HEK293T (cell line): ENCODE measurements at regions of chr3 and their contacts with region 1.

Region 1: DNA sequence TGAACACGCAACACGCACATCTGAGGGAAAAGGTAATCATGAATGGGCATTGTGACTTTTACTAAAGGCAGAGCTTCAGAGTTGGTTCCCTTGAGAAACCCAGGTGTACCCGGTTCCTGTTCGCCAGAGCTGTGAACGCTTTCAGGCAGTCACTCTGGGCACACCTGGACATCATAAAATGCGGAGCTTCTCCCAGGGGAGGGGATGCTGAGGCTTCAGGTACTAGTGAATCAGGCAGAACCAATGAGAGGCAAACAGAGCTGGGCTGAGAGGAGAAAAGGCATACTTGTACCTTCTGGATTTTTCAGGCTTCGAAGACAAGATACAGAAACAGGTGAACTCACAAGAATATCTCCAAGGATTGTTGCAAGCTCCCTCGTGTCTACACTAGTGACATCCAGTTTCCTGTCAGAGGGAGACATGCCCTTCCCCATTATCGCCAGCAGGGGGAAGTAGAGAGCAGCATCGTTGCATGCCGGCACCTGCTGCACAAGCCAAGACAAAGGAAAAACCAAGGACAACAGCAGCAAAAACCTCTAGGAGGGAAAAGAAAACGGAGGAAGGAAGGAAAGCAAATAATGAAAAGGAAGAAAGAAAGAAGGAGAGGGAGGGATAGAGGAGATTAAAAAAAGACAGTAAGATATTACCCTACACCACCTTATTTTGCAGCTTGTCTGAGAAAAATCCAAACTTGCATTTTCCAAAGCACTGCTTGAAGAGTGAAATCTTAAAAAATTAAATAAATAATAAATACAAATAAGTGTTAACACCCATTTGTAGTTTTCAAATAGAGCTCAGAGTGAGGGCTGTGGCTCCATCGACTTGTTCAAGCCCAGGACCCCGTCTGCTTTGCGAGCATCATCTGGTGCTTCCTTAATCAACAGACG is 2.0 kb downstream of the AHSG start:
- DNase-seq: peak; percentile 75

Region 2: DNA sequence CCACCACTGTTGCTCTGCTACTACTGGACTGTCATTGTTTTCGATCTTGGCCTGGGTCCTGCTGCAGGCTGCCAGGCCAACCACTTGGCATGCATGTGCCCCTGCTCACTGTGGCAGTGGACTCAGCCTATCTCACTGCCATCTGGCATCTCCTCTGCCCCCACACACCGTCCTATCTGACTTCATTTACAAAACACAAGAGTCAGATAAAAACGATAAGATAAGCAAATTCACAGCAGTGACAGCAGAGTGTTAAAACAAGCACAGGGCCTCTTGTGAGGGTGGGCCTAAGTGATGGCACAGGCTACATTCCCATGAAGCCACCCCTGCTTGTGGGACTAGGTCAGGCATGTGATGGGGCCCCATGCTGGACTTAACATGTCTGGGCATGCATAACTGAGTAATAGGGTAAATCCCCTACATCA is 138.8 kb before region 1 on chr3:
- CTCF ChIA-PET with region 1: no interaction called
- POLR2A ChIA-PET with region 1: no interaction called
- DNase-seq: no peak

Region 3: DNA sequence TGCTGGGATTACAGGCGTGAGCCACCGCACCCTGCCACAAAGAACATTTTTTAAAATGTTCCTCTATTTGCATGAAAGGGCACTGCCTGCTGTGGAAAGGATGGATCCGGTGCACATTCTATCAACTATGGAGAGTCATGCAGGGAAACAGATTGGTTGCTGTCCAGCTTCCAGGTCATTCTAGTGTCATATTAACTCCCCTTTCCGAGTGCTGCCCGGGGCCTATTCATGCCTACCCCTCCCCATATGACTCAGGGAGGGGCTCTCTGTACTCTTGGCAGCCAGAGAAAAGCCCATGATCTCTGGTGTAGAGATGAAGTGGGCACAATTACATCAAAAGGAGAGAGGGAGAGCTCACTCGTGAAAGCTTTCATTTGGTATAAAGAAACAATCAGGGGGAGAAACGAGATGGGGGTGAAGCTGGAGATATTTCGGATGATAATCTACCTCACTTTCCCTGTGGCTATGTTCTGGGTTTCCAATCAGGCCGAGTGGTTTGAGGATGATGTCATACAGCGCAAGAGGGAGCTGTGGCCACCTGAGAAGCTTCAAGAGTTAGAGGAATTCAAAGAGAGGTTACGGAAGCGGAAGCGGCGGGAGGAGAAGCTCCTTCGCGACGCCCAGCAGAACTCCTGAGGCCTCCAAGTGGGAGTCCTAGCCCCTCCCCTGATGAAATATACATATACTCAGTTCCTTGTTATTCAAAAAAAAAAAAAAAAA is 18.1 kb before region 1 on chr3:
- CTCF ChIA-PET with region 1: interaction called, 10 read pairs
- POLR2A ChIA-PET with region 1: no interaction called
- DNase-seq: no peak

Region 4: DNA sequence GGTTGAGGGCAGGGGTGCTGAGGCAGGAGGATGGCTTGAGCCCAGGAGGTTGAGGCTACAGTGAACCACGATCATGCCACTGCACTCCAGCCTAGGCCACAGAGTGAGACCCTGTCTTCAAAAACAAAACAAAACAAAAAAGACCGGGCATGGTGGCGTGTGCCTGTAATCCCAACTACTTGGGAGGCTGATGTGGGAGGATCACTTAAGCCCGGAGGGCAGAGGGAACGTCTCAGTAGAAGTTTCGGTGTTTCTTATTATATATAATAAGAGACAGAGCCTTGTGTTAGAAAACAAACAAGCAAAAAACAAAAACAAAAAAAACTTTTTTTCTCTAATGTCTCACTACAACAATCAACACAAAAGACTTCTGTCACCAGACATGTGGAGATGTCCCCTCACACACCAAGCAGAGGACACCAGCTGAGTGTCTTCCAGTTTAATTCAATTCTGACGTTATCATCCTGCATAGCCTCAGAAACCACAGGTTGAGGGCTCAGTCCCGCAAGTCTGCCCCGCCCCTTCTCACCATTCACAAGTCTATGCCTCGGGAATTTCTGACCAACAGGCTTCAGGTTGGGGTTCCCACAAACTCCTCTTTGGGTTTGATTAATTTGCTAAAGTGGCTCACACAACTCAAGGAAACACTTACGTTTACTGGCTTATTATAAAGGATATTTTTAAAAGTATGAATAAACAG is 144.5 kb after region 1 on chr3:
- CTCF ChIA-PET with region 1: no interaction called
- POLR2A ChIA-PET with region 1: no interaction called
- DNase-seq: no peak

Region 5: GRCh38 chr3:186821429-186822367 is 206.9 kb after region 1 on chr3:
- CTCF ChIA-PET with region 1: interaction called, 14 read pairs
- POLR2A ChIA-PET with region 1: interaction called, 3 read pairs
- DNase-seq: no peak